Cardiac septum (tissue), 1 donor: ENCODE measurements at regions of chr12 and their contacts with region 1.

Region 1: DNA sequence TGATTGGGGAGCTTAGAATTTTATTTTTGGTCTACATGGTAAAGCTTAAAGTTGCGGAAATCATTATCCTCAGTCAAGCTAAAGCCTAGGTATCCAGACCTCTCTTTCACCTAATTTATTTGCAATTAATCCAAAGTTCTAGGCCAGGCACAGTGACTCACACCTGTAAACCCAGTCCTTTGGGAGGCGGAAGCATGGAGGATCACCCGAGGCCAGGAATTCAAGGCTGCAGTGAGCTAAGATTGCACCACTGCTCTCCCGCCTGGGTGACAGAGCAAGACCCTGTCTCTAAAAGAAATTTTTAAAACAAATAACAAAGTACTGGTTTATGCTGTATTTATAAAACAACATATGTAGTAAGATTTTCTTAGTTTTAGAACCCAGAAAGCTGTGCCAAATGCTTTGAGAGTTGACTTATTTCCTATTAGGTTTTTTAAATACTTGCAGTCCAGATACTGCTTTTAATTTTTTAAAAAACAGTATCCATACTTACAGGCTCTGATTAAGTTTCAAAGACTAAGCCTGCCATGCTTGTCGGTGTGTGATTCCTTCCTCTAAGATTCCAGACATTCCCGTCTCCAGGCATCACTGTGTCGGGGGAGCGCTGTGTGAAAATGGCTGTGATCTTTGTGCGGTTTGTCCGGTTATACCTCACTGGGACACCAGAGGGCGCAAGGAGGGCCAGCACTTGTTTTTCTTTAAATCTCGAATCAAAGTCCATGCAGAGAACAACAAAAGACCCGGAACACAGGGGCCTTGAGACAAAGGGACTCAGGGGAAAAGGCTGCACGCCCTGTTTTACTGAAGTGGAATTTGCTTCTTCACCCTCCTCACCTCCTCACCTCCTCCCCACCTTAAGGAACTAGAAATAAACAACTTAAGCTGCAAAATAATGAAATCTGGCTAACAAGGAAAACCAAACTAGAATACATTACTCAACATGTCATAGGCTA is 24.6 kb upstream of the TMPO start:
- DNase-seq: peak; percentile 93

Region 2: GRCh38 chr12:98424726-98425401 is 65.9 kb before region 1 on chr12:
- intact Hi-C with region 1: loop called (anchors 5 kb)
- DNase-seq: peak; percentile 77